ENCODE measurements at regions of chr18 and their contacts with region 1.

Region 1: GRCh38 chr18:50429207-50429948 is 54.5 kb downstream of the SKA1 start:
- H3K4me3 Mint-ChIP-seq: no peak overlapping the region
- H3K27ac Mint-ChIP-seq: no peak overlapping the region
- H3K4me1 Mint-ChIP-seq: no peaks in the 10 kb centered on the region
- H3K27me3 Mint-ChIP-seq: peaks cover 1% of the 10 kb centered on the region

Region 2: GRCh38 chr18:49510393-49511115 is 918.8 kb before region 1 on chr18:
- intact Hi-C with region 1: loop called (anchors 5 kb)
- H3K4me3 Mint-ChIP-seq: no peak overlapping the region
- H3K27ac Mint-ChIP-seq: no peak overlapping the region
- H3K4me1 Mint-ChIP-seq: no peaks in the 10 kb centered on the region
- H3K27me3 Mint-ChIP-seq: peaks cover 17% of the 10 kb centered on the region

Region 3: GRCh38 chr18:50218432-50219197 is 210.8 kb before region 1 on chr18:
- intact Hi-C with region 1: loop called (anchors 5 kb)
- H3K4me3 Mint-ChIP-seq: no peak overlapping the region
- H3K27ac Mint-ChIP-seq: no peak overlapping the region
- H3K4me1 Mint-ChIP-seq: no peaks in the 10 kb centered on the region
- H3K27me3 Mint-ChIP-seq: peaks cover 13% of the 10 kb centered on the region

Measured in dendritic cell treated with granulocyte-macrophage colony-stimulating factor and Interleukin-4, amounts not matched to agents 40 ng/mL and 50 ng/mL, for 4 days (primary cell).